Heart left ventricle (tissue), 16 donors: ENCODE measurements at regions of chr16 and their contacts with region 1.

Region 1: GRCh38 chr16:1983544-1984346 is at the start of gene GFER:
- DNase-seq: peak; percentile 92 to 95 (median 93)
- ATAC-seq: peak; percentile 91 to 96 (median 95)
- H3K4me3 ChIP-seq: peak within 1 kb of the TSS; percentile 59 to 98 (median 86)
- H3K27ac ChIP-seq: peak within 1 kb of the TSS; percentile 25 to 88 (median 80)
- H3K4me1 ChIP-seq: peaks cover 3 to 43% (median 20%) of the 10 kb centered on the region in 12 donors
- H3K27me3 ChIP-seq: peaks cover 9 to 51% (median 26%) of the 10 kb centered on the region in 9 donors
- CTCF ChIP-seq: peak in 10 of 12 donors; percentile 6 to 73 (median 48)
- POLR2A ChIP-seq: peak in 1 of 2 donors; percentile 74
- total RNA-seq, gene GFER: 18.0 to 29.9 (median 23.5) TPM

Region 2: GRCh38 chr16:2009789-2010510 is 26.2 kb after region 1 on chr16 and contains the start of gene ZNF598:
- intact Hi-C with region 1: loop called in 1 of 10 experiments (anchors 2 kb)
- DNase-seq: peak; percentile 87 to 91 (median 88)
- ATAC-seq: peak; percentile 90 to 97 (median 96)
- H3K4me3 ChIP-seq: peak within 1 kb of the TSS; percentile 69 to 100 (median 94)
- H3K27ac ChIP-seq: peak within 1 kb of the TSS; percentile 58 to 98 (median 93)
- H3K4me1 ChIP-seq: peaks cover 20 to 53% (median 38%) of the 10 kb centered on the region in 12 donors
- H3K27me3 ChIP-seq: no peaks in the 10 kb centered on the region
- CTCF ChIP-seq: peak in 2 of 12 donors; percentile 6 to 24
- POLR2A ChIP-seq: peak in 1 of 2 donors; percentile 92
- total RNA-seq, gene ZNF598: 10.9 to 47.4 (median 17.0) TPM

Region 3: DNA sequence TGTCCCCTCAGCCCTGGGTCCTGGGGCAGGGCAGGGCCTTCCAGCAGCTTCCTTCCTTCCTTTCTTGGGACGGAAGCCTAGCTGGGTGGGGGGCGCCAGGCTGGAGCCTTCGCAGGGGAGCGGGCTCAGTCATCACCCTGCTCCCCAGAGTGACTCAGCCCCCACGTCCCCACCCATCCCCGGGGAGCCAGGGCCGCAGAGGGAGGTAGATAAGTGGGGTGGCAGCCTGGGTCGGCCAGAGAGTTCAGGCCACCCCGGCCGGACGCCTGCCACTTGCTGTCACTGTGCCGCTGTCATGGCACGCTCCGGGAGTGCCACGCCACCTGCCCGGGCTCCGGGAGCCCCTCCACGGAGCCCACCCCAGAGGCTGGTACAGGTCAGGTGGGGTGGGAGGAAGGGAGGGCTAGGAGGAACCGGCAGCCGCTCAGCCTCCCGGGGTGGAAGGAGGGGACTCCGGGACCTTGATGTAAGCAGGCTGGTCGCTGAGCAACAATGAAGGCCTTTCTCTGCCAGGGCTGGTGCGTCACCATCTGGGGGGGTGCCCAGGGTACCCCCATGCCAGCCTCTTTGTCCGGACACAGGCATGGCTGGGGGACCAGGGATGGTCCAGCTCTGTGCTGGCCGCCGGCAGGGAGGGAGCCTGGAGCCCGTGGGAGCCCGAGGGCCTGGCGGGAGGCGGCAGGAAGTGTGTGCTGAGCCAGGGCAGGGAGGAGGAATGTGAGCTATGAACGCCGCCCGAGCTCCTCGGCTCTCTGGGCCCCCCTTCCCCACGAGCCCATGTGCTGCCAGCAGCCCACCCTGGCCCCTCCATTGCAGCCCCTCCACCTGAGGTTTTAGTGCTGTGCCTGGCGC is 49.5 kb after region 1 on chr16:
- intact Hi-C with region 1: no loop called
- DNase-seq: peak; percentile 78 to 89 (median 84)
- ATAC-seq: peak; percentile 45 to 67 (median 56)
- H3K4me3 ChIP-seq: peak overlapping the region; percentile 35 to 95 (median 72)
- H3K27ac ChIP-seq: peak overlapping the region; percentile 83 to 98 (median 94)
- H3K4me1 ChIP-seq: peaks cover 3 to 91% (median 51%) of the 10 kb centered on the region in 12 donors
- H3K27me3 ChIP-seq: no peaks in the 10 kb centered on the region
- CTCF ChIP-seq: no peak
- POLR2A ChIP-seq: peak in 1 of 2 donors; percentile 70

Region 4: DNA sequence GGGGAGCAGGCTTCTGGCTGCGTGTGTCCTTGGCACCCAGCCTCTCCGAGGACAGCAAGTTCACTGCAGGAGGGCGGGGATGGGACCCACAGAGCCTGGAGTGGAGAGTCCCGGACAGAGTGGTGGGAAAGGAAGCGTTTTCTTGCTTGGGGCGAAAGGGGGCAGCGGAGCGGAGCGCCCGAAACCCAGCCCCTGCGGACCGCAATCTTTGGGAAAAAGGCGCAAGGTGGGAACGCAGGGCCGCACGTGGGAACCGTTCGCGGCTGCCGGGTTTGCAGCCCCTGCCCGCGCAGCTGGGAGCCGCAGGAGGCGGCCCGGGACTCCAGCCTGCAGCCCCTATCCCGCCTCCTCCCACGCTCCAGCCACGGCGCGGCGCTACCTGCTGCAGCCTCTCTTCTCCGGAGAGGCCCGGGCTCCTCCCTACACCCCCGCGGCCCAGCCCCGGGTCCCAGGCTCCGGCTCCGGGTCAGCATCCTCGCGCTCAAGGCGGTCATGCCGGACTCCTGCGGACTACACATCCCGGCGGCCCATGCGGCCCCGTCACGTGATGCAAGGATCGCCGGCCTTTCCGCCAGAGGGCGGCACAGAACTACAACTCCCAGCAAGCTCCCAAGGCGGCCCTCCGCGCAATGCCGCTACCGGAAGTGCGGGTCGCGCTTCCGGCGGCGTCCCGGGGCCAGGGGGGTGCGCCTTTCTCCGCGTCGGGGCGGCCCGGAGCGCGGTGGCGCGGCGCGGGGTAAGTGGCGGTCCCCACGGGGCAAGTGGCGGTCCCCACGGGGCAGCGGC is 63.8 kb after region 1 on chr16 and contains the starts of genes NTHL1 and TSC2:
- intact Hi-C with region 1: no loop called
- DNase-seq: peak; percentile 97 to 98 (median 98)
- ATAC-seq: peak; percentile 82 to 94 (median 92)
- H3K4me3 ChIP-seq: peak within 1 kb of the TSS; percentile 71 to 99 (median 91)
- H3K27ac ChIP-seq: peak within 1 kb of the TSS; percentile 36 to 94 (median 86)
- H3K4me1 ChIP-seq: peaks cover 14 to 61% (median 47%) of the 10 kb centered on the region in 12 donors
- H3K27me3 ChIP-seq: no peaks in the 10 kb centered on the region
- CTCF ChIP-seq: peak; percentile 24 to 78 (median 54)
- POLR2A ChIP-seq: peak in 1 of 2 donors; percentile 77
- total RNA-seq, gene NTHL1: 9.0 to 25.0 (median 11.7) TPM
- total RNA-seq, gene TSC2: 48.4 to 94.5 (median 70.4) TPM